CD4-positive, alpha-beta T cell (primary cell): ENCODE measurements at regions of chr1 and their contacts with region 1.

Region 1: GRCh38 chr1:154442006-154442740 is 37.0 kb downstream of the IL6R start:
- DNase-seq: peak in 1 of 14 experiments; percentile 47
- ATAC-seq: peak; percentile 6
- H3K4me3 ChIP-seq: peak overlapping the region; percentile 20
- H3K4me3 Mint-ChIP-seq: peak overlapping the region; percentile 81
- H3K27ac ChIP-seq: peak overlapping the region; percentile 72 to 75
- H3K27ac Mint-ChIP-seq: peak overlapping the region; percentile 94
- H3K4me1 ChIP-seq: peaks cover 77% of the 10 kb centered on the region
- H3K4me1 Mint-ChIP-seq: peaks cover 75% of the 10 kb centered on the region
- H3K27me3 ChIP-seq: no peaks in the 10 kb centered on the region
- H3K27me3 Mint-ChIP-seq: no peaks in the 10 kb centered on the region
- CTCF ChIP-seq: peak; percentile 34

Region 2: DNA sequence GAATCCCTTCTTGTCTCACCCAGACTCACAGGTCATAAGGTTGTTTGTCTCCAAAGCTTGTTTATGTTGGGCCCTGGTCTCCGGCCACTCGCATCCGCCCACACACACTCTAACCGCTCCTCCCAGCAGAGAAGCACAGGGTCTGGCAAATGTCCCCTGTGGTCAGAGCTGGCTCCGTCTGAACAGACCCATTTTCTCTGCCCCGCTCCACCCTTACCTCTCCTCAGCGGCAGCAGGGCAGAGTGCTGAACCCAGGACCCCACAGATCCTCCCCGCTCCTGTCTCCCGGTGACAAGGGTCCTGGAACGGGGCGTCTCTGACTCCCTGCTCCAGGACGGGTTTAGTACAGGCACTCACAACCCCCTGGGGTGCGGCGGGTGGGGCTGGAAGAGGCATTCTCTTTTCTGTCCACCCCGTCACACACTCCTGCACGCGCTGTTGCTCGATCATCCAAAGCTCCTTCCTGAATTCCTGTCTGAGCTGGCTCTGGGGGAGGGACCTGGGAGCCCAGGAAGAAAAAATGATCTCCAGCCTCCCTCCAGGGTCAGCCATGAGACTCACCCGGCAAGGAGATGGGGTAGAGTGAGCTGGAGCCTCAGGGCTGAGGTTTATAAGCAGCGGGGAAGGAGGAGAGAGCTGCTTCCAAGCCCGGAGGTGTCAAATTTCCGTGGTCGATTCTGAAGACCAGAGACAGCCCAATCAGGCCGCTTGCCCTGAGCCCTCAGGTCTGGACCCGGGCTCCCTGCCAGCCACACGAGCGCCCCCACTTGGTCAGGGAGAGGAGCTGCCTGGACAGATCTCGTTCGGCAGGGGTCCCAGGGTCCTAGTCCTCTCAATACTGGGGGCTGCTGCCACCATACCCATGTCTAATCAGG is 815.0 kb before region 1 on chr1 and contains the start of gene S100A13:
- CTCF ChIA-PET with region 1: no interaction called
- POLR2A ChIA-PET with region 1: no interaction called
- intact Hi-C with region 1: no loop called
- DNase-seq: no peak
- ATAC-seq: no peak
- H3K4me3 ChIP-seq: no peak within 1 kb of the TSS
- H3K4me3 Mint-ChIP-seq: no peak within 1 kb of the TSS
- H3K27ac ChIP-seq: no peak within 1 kb of the TSS
- H3K27ac Mint-ChIP-seq: no peak within 1 kb of the TSS
- H3K4me1 ChIP-seq: peaks cover 6% of the 10 kb centered on the region
- H3K4me1 Mint-ChIP-seq: no peaks in the 10 kb centered on the region
- H3K27me3 ChIP-seq: no peaks in the 10 kb centered on the region
- H3K27me3 Mint-ChIP-seq: no peaks in the 10 kb centered on the region
- CTCF ChIP-seq: no peak
- total RNA-seq, gene S100A13: 2.1 to 2.8 TPM

Region 3: DNA sequence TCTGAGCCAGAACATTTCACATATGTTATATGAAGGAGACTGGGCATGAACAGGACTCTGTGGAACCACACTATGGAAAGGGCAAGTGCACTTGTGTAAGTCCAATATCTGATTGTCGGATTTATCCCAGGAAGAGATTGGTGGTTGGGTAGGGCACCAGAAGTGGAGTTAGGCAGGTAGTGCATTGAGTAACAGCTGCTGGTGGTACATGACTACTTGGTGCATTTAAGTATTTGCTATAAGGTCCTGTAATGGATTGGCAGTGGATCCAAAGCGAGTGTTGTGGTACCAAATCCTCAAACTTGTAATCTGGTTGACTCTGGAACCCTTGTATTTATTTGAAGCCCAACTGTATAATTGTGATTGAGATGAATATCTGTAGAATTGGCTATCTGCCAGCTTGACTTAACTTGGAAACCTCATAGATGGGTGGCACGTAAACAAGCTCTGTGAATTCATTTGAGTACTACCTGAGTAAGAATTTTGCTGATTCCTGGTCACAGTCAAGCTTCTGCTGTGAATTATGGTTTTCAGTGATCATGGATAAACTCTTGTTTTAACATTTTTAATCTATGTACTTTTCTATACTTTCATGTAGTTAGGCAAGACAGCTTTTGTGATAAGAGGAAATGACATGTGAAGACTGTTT is 200.3 kb before region 1 on chr1:
- CTCF ChIA-PET with region 1: no interaction called
- POLR2A ChIA-PET with region 1: no interaction called
- intact Hi-C with region 1: no loop called
- DNase-seq: peak in 3 of 14 experiments; percentile 18 to 36 (median 26)
- ATAC-seq: no peak
- H3K4me3 ChIP-seq: no peak overlapping the region
- H3K4me3 Mint-ChIP-seq: no peak overlapping the region
- H3K27ac ChIP-seq: no peak overlapping the region
- H3K27ac Mint-ChIP-seq: peak overlapping the region; percentile 80
- H3K4me1 ChIP-seq: no peaks in the 10 kb centered on the region
- H3K4me1 Mint-ChIP-seq: peaks cover 46% of the 10 kb centered on the region
- H3K27me3 ChIP-seq: no peaks in the 10 kb centered on the region
- H3K27me3 Mint-ChIP-seq: no peaks in the 10 kb centered on the region
- CTCF ChIP-seq: no peak

Region 4: GRCh38 chr1:154463512-154463990 is 21.4 kb after region 1 on chr1:
- CTCF ChIA-PET with region 1: interaction called, 4 read pairs
- POLR2A ChIA-PET with region 1: interaction called, 66 read pairs
- intact Hi-C with region 1: no loop called
- DNase-seq: peak; percentile 47 to 87 (median 70)
- ATAC-seq: peak; percentile 71
- H3K4me3 ChIP-seq: no peak overlapping the region
- H3K4me3 Mint-ChIP-seq: peak overlapping the region; percentile 87
- H3K27ac ChIP-seq: peak overlapping the region; percentile 40 to 59
- H3K27ac Mint-ChIP-seq: peak overlapping the region; percentile 93
- H3K4me1 ChIP-seq: peaks cover 95% of the 10 kb centered on the region
- H3K4me1 Mint-ChIP-seq: peaks cover 82% of the 10 kb centered on the region
- H3K27me3 ChIP-seq: no peaks in the 10 kb centered on the region
- H3K27me3 Mint-ChIP-seq: no peaks in the 10 kb centered on the region
- CTCF ChIP-seq: no peak

Region 5: GRCh38 chr1:154493276-154493675 is 51.1 kb after region 1 on chr1:
- CTCF ChIA-PET with region 1: no interaction called
- POLR2A ChIA-PET with region 1: no interaction called
- intact Hi-C with region 1: no loop called
- DNase-seq: peak in 4 of 14 experiments; percentile 45 to 55 (median 53)
- ATAC-seq: peak; percentile 51
- H3K4me3 ChIP-seq: no peak overlapping the region
- H3K4me3 Mint-ChIP-seq: peak overlapping the region; percentile 68
- H3K27ac ChIP-seq: no peak overlapping the region
- H3K27ac Mint-ChIP-seq: no peak overlapping the region
- H3K4me1 ChIP-seq: peaks cover 30% of the 10 kb centered on the region
- H3K4me1 Mint-ChIP-seq: peaks cover 43% of the 10 kb centered on the region
- H3K27me3 ChIP-seq: no peaks in the 10 kb centered on the region
- H3K27me3 Mint-ChIP-seq: no peaks in the 10 kb centered on the region
- CTCF ChIP-seq: no peak